Activated B cell treated with CpG ODN at 0.5 μM for 24 hours (primary cell): ENCODE measurements at regions of chr9 and their contacts with region 1.

Region 1: DNA sequence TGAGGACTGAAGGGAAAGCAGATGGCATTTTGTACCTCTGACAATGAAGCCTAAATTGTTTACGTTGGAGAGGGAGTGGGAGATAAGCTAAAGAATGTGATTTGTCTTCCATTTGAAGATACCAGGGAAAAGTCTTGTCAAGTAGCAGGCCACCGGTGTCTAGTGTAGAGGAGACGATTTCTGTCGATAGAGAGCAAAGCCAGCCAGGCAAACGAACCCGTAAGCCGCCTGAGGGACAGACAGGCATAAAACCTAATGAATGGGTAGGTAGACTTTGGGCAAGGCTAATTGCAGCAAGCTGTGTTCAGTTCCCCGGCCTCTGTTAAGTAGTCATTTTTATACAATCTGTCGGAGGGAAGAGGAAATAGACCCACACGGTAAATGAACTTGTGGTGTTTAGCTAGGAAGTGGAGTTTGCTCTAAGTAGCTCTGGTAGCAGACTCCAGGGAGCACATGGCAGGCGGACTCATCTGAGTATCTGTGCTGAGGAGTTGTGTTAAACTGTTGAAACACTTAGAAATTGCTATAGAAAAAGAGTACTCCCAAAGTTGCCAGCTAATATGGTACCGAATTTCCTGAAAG is 28.8 kb downstream of the SMARCA2 start:
- DNase-seq: no peak
- ATAC-seq: peak; percentile 79
- H3K4me3 Mint-ChIP-seq: peak overlapping the region; percentile 70
- H3K27ac Mint-ChIP-seq: peak overlapping the region; percentile 90
- H3K4me1 Mint-ChIP-seq: peaks cover 44% of the 10 kb centered on the region
- H3K27me3 Mint-ChIP-seq: no peaks in the 10 kb centered on the region
- CTCF ChIP-seq: no peak

Region 2: DNA sequence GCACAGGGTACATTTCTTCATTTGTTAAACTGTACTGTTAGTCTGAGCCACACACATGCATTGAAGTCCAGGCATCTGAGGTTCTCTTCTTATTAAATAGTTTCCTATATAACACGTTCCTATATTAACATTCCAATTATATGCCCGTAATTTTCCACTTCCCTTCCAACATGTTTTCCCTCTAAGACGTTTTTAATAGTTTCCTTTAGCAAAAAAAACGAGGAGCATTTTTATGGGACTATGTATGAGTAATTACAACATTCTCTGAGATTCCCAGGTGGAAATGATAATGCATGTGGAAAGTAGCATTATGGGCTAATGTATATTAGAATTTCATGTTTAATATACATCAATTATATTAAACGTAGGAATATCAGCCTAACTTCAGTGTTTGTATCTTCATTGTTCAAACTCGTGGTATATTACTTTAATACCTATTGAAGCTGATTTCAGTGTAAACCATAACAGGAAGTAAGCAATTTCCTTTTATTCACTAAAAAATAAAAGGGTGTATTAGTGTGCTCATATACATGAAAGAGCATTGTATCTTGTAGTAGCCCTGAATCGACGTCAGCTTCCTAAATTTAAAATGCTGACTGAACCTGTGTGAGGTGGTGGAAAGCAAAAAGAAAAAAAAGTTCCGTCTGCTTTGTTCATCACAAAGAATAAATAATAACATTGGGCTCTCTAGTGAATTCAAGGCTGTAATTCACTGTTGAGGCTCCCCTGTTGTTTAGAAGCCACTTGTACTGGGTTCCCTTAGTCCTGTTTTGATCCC is 17.6 kb before region 1 on chr9:
- CTCF ChIA-PET with region 1: no interaction called
- POLR2A ChIA-PET with region 1: interaction called, 5 read pairs
- intact Hi-C with region 1: loop called (anchors 2 kb)
- DNase-seq: no peak
- ATAC-seq: no peak
- H3K4me3 Mint-ChIP-seq: no peak overlapping the region
- H3K27ac Mint-ChIP-seq: no peak overlapping the region
- H3K4me1 Mint-ChIP-seq: peaks cover 89% of the 10 kb centered on the region
- H3K27me3 Mint-ChIP-seq: no peaks in the 10 kb centered on the region
- CTCF ChIP-seq: no peak

Region 3: DNA sequence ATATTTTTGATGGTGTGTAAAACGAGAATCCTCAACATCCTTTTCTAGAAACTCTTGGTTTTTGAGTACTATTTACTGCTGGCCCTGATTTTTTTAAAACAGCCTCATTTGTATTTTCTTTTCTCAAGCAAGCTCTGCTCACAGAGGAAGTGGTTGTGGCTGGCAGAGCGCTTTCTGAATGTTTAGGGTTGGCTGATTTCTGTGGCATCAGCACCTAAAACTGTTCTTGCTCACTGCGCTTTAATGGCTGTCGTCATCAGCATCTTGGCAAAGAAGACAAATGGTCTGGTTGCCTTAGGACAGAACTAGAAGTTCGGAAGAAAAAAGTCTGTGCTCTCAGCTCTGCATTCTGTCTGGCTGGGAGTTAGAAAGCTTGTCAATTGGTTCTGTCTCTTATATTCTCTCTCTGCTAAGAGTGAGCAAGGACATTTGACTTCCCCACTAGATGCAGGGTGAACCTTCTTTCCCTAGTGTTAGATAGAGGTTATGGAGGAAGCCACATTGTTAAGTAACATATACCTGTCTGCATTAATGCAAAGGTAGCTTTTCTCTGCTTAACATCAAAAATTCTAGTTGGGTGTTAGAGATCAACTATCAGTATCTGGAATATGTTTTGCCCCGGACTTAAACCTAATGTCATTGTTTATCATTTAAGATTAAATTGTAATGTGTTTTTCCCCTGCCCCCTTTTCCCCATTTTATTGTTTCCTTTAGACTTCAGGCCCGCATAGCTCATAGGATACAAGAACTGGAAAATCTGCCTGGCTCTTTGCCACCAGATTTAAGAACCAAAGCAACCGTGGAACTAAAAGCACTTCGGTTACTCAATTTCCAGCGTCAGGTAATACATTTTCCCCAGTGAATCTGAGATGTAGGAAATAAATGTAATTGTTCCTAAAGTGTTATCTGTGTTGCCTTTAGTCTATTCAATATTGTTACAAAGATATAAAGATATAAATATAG is 10.2 kb after region 1 on chr9:
- CTCF ChIA-PET with region 1: interaction called, 4 read pairs
- POLR2A ChIA-PET with region 1: interaction called, 29 read pairs
- intact Hi-C with region 1: loop called (anchors 1 kb)
- DNase-seq: peak; percentile 27
- ATAC-seq: peak; percentile 92
- H3K4me3 Mint-ChIP-seq: peak overlapping the region; percentile 55
- H3K27ac Mint-ChIP-seq: peak overlapping the region; percentile 85
- H3K4me1 Mint-ChIP-seq: peaks cover 29% of the 10 kb centered on the region
- H3K27me3 Mint-ChIP-seq: no peaks in the 10 kb centered on the region
- CTCF ChIP-seq: no peak

Region 4: GRCh38 chr9:2354856-2355696 is 311.1 kb after region 1 on chr9:
- CTCF ChIA-PET with region 1: no interaction called
- POLR2A ChIA-PET with region 1: no interaction called
- intact Hi-C with region 1: no loop called
- DNase-seq: no peak
- ATAC-seq: no peak
- H3K4me3 Mint-ChIP-seq: no peak overlapping the region
- H3K27ac Mint-ChIP-seq: no peak overlapping the region
- H3K4me1 Mint-ChIP-seq: no peaks in the 10 kb centered on the region
- H3K27me3 Mint-ChIP-seq: peaks cover 5% of the 10 kb centered on the region
- CTCF ChIP-seq: no peak

Region 5: DNA sequence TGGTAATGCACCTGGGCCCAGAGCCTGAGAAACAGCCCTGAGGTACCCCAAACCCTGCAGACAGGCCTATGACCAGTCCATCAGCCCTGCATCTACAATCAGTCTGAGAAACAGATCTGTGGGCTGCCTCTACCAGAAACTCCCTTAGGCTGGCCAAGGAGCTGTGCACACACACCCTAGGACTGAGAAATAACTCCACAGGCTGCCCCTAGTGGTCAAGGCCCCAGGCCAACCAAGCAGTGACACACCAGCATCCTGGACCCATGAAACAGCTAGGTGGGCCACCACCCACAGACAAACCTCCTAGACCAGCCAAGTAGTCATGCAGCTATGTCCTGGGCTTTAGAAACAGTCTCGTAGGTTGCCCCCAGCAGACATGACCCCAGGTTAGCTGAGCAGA is 324.0 kb after region 1 on chr9:
- CTCF ChIA-PET with region 1: no interaction called
- POLR2A ChIA-PET with region 1: no interaction called
- intact Hi-C with region 1: no loop called
- DNase-seq: no peak
- ATAC-seq: no peak
- H3K4me3 Mint-ChIP-seq: no peak overlapping the region
- H3K27ac Mint-ChIP-seq: no peak overlapping the region
- H3K4me1 Mint-ChIP-seq: no peaks in the 10 kb centered on the region
- H3K27me3 Mint-ChIP-seq: peaks cover 4% of the 10 kb centered on the region
- CTCF ChIP-seq: no peak